ENCODE measurements at regions of chr20 and their contacts with region 1.

Region 1: DNA sequence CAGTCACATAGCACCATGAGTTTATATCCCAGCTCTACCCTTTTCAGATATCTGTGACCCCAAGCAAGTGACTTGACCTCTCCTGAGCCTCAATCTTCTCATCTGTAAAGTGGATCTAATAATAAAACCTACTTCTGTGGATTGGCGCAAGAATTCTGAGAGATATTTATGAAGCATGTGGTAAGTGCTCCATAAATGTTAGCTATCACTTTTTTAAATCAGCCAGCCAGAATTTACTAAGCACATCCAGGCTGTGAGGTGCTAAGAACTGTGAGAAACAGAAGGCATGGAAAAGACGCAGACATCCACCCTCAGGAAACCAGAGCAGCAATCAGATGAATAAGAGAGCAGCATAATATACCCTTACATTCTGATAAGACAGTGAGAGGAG is 862 bp downstream of the C20orf96 start:
- DNase-seq: no peak
- H3K4me3 ChIP-seq: peak overlapping the region; percentile 33 to 79 (median 56)
- H3K27ac ChIP-seq: peak overlapping the region in 7 of 8 donors; percentile 72 to 86 (median 76)
- H3K4me1 ChIP-seq: peaks cover 13 to 42% (median 23%) of the 10 kb centered on the region in 6 donors
- H3K27me3 ChIP-seq: no peaks in the 10 kb centered on the region
- CTCF ChIP-seq: no peak
- POLR2A ChIP-seq: no peak

Region 2: DNA sequence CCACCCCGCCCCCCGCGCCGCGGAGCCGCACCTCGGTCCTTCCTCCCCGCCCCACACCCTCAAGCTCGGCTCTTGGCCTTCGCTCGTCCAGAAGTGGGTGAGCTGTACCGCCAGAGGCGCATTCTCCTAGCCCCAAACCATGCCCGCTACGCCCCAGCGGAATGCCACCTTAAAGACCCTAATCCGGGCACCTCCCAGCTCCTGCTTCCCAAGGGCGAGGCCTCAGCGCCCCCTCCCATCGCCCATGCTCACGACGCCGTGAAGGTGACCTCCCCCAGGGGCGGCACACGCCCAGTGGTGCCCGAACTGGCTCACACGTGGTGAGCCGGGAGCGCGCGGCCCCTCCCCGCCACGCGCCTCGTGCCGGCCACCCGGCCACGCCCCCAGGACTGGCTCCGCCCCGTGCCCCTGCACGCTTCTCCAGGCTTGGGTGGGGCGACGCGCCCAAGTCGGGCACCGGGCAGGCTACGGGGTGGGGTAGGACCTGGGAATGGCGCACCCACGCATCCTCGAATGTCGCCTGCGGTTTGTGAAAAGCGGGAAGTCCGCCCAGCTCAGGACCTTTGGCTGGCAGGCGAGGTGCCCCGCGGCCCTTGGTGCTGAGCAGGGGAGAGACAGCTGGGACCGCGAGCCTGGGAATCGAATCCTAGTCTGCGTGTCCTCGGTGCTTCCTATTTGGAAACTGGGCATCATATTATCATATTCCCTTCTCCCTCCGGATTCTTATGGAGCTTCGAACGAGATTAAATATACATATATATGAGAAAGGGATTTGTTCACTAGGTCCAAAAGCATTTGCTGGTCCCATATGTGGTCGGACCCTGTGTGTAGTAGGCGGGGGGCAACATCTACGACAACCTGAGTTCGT is 34.7 kb after region 1 on chr20:
- intact Hi-C with region 1: loop called (anchors 5 kb)
- DNase-seq: peak; percentile 97
- H3K4me3 ChIP-seq: peak overlapping the region; percentile 69 to 94 (median 78)
- H3K27ac ChIP-seq: peak overlapping the region; percentile 90 to 98 (median 94)
- H3K4me1 ChIP-seq: peaks cover 3 to 54% (median 44%) of the 10 kb centered on the region in 6 donors
- H3K27me3 ChIP-seq: peaks cover 0 to 14% (median 0%) of the 10 kb centered on the region in 7 donors
- CTCF ChIP-seq: peak in 9 of 11 experiments; percentile 9 to 57 (median 44)
- POLR2A ChIP-seq: peak in 1 of 3 donors; percentile 7

Region 3: DNA sequence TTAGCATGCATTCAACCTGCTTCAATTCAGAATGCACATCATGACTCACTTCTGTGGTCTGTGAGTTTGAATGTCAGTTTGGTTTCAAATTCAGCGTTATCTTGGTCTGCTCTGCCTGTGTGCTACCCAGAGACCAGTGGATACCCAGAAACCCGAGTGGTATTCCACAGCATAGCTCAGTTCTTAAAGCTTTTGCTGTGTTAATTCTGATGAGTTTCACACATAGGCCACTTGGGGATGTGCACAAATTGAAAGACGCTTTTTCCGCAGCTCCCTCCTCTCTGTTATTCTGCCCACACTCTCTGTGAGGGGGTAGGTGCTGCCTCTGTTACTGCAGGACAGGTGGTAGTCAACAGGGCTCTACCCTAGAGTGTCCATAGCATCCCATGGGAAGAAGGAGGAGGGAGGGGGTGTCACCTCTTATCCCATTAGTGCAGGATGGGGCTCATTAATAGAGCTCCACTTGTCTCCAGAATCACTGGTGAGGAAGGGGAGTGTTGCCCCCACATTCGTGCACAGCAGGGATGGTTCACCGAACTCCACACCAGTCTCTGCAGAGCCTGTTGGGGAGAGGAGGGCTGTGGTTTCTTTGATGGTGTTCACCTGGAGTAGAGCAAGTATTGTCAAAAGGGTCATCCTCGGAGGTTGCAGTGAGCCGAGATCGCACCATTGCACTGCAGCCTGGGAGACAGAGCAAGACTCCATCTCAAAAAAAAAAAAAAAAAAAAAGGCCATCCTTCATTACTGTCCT is 1068.4 kb after region 1 on chr20:
- intact Hi-C with region 1: no loop called
- DNase-seq: no peak
- H3K4me3 ChIP-seq: no peak overlapping the region
- H3K27ac ChIP-seq: no peak overlapping the region
- H3K4me1 ChIP-seq: peaks cover 0 to 22% (median 6%) of the 10 kb centered on the region in 6 donors
- H3K27me3 ChIP-seq: no peaks in the 10 kb centered on the region
- CTCF ChIP-seq: no peak
- POLR2A ChIP-seq: no peak

Measured in spleen (tissue), 13 donors.